ENCODE measurements at regions of chr11 and their contacts with region 1.

Region 1: GRCh38 chr11:14463623-14464022 is 36.0 kb downstream of the COPB1 start:
- DNase-seq: peak in 3 of 5 donors; percentile 9 to 19 (median 10)
- H3K4me3 ChIP-seq: no peak overlapping the region
- H3K4me3 Mint-ChIP-seq: no peak overlapping the region
- H3K27ac ChIP-seq: no peak overlapping the region
- H3K27ac Mint-ChIP-seq: no peak overlapping the region
- H3K4me1 ChIP-seq: peaks cover 38% of the 10 kb centered on the region
- H3K4me1 Mint-ChIP-seq: peaks cover 12 to 17% (median 13%) of the 10 kb centered on the region in 4 donors
- H3K27me3 ChIP-seq: no peaks in the 10 kb centered on the region
- H3K27me3 Mint-ChIP-seq: no peaks in the 10 kb centered on the region

Region 2: GRCh38 chr11:14480716-14481115 is 17.1 kb after region 1 on chr11:
- CTCF ChIA-PET with region 1: interaction called, 10 read pairs
- POLR2A ChIA-PET with region 1: no interaction called
- intact Hi-C with region 1: no loop called
- DNase-seq: no peak
- H3K4me3 ChIP-seq: no peak overlapping the region
- H3K4me3 Mint-ChIP-seq: no peak overlapping the region
- H3K27ac ChIP-seq: no peak overlapping the region
- H3K27ac Mint-ChIP-seq: no peak overlapping the region
- H3K4me1 ChIP-seq: no peaks in the 10 kb centered on the region
- H3K4me1 Mint-ChIP-seq: peaks cover 5 to 14% (median 10%) of the 10 kb centered on the region in 4 donors
- H3K27me3 ChIP-seq: no peaks in the 10 kb centered on the region
- H3K27me3 Mint-ChIP-seq: no peaks in the 10 kb centered on the region